Gastrocnemius medialis (tissue), 4 donors: ENCODE measurements at regions of chr5 and their contacts with region 1.

Region 1: GRCh38 chr5:132419502-132420468 is 50.3 kb downstream of the SLC22A5 start:
- DNase-seq: peak; percentile 58 to 83
- ATAC-seq: peak; percentile 49 to 52
- H3K4me3 ChIP-seq: no peak overlapping the region
- H3K27ac ChIP-seq: peak overlapping the region; percentile 87 to 99 (median 94)
- H3K4me1 ChIP-seq: peaks cover 92 to 94% of the 10 kb centered on the region in 2 donors
- H3K27me3 ChIP-seq: no peaks in the 10 kb centered on the region
- CTCF ChIP-seq: peak; percentile 88 to 92 (median 92)
- POLR2A ChIP-seq: no peak

Region 2: GRCh38 chr5:132456296-132457001 is 36.7 kb after region 1 on chr5:
- in situ Hi-C with region 1: no loop called
- intact Hi-C with region 1: loop called (anchors 2 kb)
- DNase-seq: peak; percentile 41 to 60
- ATAC-seq: peak in 1 of 2 donors; percentile 2
- H3K4me3 ChIP-seq: no peak overlapping the region
- H3K27ac ChIP-seq: peak overlapping the region; percentile 74 to 95 (median 82)
- H3K4me1 ChIP-seq: peaks cover 42 to 53% of the 10 kb centered on the region in 2 donors
- H3K27me3 ChIP-seq: no peaks in the 10 kb centered on the region
- CTCF ChIP-seq: no peak
- POLR2A ChIP-seq: no peak

Region 3: GRCh38 chr5:132490486-132491367 is 70.9 kb after region 1 on chr5 and contains the start of gene IRF1:
- in situ Hi-C with region 1: loop called in 3 of 4 experiments (anchors 5 to 10 kb)
- intact Hi-C with region 1: loop called (anchors 1 kb)
- DNase-seq: peak; percentile 93 to 96
- ATAC-seq: peak; percentile 90 to 92
- H3K4me3 ChIP-seq: peak within 1 kb of the TSS; percentile 70 to 90 (median 84)
- H3K27ac ChIP-seq: peak within 1 kb of the TSS; percentile 86 to 95 (median 90)
- H3K4me1 ChIP-seq: peaks cover 36 to 40% of the 10 kb centered on the region in 2 donors
- H3K27me3 ChIP-seq: no peaks in the 10 kb centered on the region
- CTCF ChIP-seq: no peak
- POLR2A ChIP-seq: peak; percentile 96 to 97
- total RNA-seq, gene IRF1: 5.5 to 20.6 (median 8.4) TPM

Region 4: GRCh38 chr5:132495667-132496190 is 75.9 kb after region 1 on chr5:
- in situ Hi-C with region 1: loop called in 2 of 4 experiments (anchors 5 to 10 kb)
- intact Hi-C with region 1: loop called (anchors 1 kb)
- DNase-seq: peak; percentile 57 to 69
- ATAC-seq: peak; percentile 28 to 36
- H3K4me3 ChIP-seq: peak overlapping the region; percentile 60 to 74 (median 66)
- H3K27ac ChIP-seq: peak overlapping the region; percentile 77 to 84 (median 81)
- H3K4me1 ChIP-seq: peaks cover 31 to 37% of the 10 kb centered on the region in 2 donors
- H3K27me3 ChIP-seq: no peaks in the 10 kb centered on the region
- CTCF ChIP-seq: no peak
- POLR2A ChIP-seq: no peak

Region 5: GRCh38 chr5:132500931-132501630 is 81.3 kb after region 1 on chr5:
- in situ Hi-C with region 1: loop called in 2 of 4 experiments (anchors 5 to 10 kb)
- intact Hi-C with region 1: loop called (anchors 1 kb)
- DNase-seq: peak; percentile 35 to 50
- ATAC-seq: peak; percentile 25 to 44
- H3K4me3 ChIP-seq: no peak overlapping the region
- H3K27ac ChIP-seq: peak overlapping the region; percentile 36 to 54 (median 42)
- H3K4me1 ChIP-seq: peaks cover 17 to 21% of the 10 kb centered on the region in 2 donors
- H3K27me3 ChIP-seq: no peaks in the 10 kb centered on the region
- CTCF ChIP-seq: peak; percentile 89 to 96 (median 90)
- POLR2A ChIP-seq: no peak